ENCODE measurements at regions of chr16 and their contacts with region 1.

Region 1: GRCh38 chr16:28069971-28070794 is 6.7 kb upstream of the GSG1L start:
- DNase-seq: no peak
- H3K4me3 Mint-ChIP-seq: no peak overlapping the region
- H3K27ac Mint-ChIP-seq: no peak overlapping the region
- H3K4me1 Mint-ChIP-seq: no peaks in the 10 kb centered on the region
- H3K27me3 Mint-ChIP-seq: peaks cover 92% of the 10 kb centered on the region
- CTCF ChIP-seq: no peak

Region 2: GRCh38 chr16:27972500-27972899 is 97.7 kb before region 1 on chr16:
- CTCF ChIA-PET with region 1: interaction called, 40 read pairs
- intact Hi-C with region 1: loop called (anchors 1 kb)
- DNase-seq: peak; percentile 58
- H3K4me3 Mint-ChIP-seq: no peak overlapping the region
- H3K27ac Mint-ChIP-seq: no peak overlapping the region
- H3K4me1 Mint-ChIP-seq: no peaks in the 10 kb centered on the region
- H3K27me3 Mint-ChIP-seq: peaks cover 34% of the 10 kb centered on the region
- CTCF ChIP-seq: peak; percentile 47

Measured in Calu3 (cell line).